CD8-positive, alpha-beta T cell (primary cell): ENCODE measurements at regions of chr15 and their contacts with region 1.

Region 1: DNA sequence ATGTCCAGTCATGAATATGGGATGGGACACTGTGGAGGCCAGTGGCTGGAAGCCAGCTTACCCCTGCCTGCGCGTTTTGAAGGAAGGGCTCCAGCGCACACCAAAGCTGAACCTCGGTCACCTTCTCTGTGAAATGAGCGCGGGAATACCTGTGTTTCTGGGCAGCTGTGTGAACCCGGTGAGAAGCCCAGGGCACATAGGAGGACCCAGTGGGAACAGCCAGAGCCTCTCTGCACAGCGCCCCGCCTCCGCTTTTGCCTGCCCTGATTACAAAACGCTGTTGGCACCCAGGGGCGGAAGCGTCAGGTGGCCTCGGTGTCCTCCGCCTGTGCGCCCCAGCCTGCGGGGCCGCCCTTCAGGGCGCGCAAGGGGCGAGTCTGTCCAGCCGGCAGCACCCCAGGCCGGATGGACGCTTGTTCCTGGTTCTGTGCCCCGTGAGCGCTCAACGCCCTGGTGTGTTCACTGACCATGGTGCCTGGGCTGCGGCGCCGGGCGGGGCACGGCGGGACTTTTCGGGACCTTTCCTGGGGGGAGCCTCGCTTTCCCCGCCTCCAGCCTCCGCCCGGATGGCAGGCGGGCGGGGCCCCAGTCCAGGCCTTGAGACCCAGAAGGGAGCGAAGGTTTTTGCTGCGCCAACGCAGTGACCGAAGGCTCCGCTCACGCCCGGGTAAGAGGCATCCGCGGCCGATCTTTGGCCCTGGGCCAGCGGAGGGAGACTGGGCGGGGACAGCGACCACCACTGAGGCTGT is at the start of gene SQOR:
- DNase-seq: peak; percentile 25 to 83 (median 67)
- ATAC-seq: peak; percentile 57
- H3K4me3 ChIP-seq: peak within 1 kb of the TSS; percentile 67 to 96
- H3K4me3 Mint-ChIP-seq: peak within 1 kb of the TSS; percentile 97
- H3K27ac ChIP-seq: peak within 1 kb of the TSS; percentile 72 to 78
- H3K27ac Mint-ChIP-seq: peak within 1 kb of the TSS; percentile 94
- H3K4me1 ChIP-seq: peaks cover 34% of the 10 kb centered on the region
- H3K4me1 Mint-ChIP-seq: peaks cover 43% of the 10 kb centered on the region
- H3K27me3 ChIP-seq: no peaks in the 10 kb centered on the region
- H3K27me3 Mint-ChIP-seq: no peaks in the 10 kb centered on the region
- CTCF ChIP-seq: no peak
- total RNA-seq, gene SQOR: 11.8 to 14.4 TPM

Region 2: DNA sequence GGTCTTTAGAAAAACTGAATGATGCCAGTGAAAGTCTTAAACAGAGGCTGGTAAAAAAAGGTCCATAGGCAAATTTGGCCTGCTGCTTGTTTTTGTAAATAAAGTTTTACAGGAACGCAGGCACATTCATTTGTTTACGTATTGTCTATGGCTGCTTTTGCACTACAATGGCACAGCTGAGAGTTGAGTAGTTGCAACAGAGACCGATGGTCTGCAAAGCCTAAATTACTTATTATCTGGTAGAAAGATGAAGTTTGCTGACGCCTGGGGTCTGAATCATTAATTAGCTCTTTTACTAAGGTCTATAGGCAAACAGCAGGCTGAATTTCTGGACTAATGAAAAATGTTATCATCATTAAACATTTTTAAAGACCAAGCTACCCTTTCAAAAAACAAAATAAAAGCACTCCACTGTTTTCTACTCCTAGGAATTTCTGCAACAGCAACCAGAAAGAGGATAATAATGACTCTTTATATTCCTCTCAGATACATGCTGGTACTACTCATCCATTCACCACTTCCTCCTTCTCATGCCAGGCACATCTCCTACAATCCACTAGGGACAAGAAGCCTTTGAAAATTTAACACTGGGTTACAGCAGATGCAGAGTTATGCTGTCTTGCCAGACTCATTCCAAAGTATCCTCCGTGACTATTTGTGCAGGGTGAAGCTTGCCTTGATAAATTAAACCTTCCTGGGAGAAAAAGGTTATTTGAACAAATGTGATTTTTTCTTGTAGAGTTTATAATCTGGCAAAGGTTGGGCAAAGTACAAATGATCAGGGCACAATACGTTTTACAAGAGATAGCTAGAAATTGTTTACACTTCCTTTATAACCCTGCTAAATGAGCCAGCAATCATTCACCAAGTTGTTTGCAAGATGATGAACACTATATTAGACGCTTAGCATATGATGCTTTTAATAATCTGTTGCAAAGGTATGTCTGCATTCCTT is 262.3 kb before region 1 on chr15:
- CTCF ChIA-PET with region 1: no interaction called
- POLR2A ChIA-PET with region 1: no interaction called
- intact Hi-C with region 1: no loop called
- DNase-seq: no peak
- ATAC-seq: no peak
- H3K4me3 ChIP-seq: no peak overlapping the region
- H3K4me3 Mint-ChIP-seq: no peak overlapping the region
- H3K27ac ChIP-seq: no peak overlapping the region
- H3K27ac Mint-ChIP-seq: no peak overlapping the region
- H3K4me1 ChIP-seq: peaks cover 5% of the 10 kb centered on the region
- H3K4me1 Mint-ChIP-seq: peaks cover 13% of the 10 kb centered on the region
- H3K27me3 ChIP-seq: peaks cover 4 to 5% of the 10 kb centered on the region in 2 experiments
- H3K27me3 Mint-ChIP-seq: peaks cover 40% of the 10 kb centered on the region
- CTCF ChIP-seq: no peak

Region 3: GRCh38 chr15:45587095-45587860 is 47.3 kb before region 1 on chr15 and contains the start of gene BLOC1S6:
- CTCF ChIA-PET with region 1: interaction called, 5 read pairs
- POLR2A ChIA-PET with region 1: interaction called, 11 read pairs
- intact Hi-C with region 1: loop called (anchors 1 kb)
- DNase-seq: peak; percentile 83 to 95 (median 90)
- ATAC-seq: peak; percentile 77
- H3K4me3 ChIP-seq: peak within 1 kb of the TSS; percentile 82 to 86
- H3K4me3 Mint-ChIP-seq: peak within 1 kb of the TSS; percentile 100
- H3K27ac ChIP-seq: peak within 1 kb of the TSS; percentile 93 to 98
- H3K27ac Mint-ChIP-seq: peak within 1 kb of the TSS; percentile 100
- H3K4me1 ChIP-seq: peaks cover 32% of the 10 kb centered on the region
- H3K4me1 Mint-ChIP-seq: peaks cover 50% of the 10 kb centered on the region
- H3K27me3 ChIP-seq: no peaks in the 10 kb centered on the region
- H3K27me3 Mint-ChIP-seq: no peaks in the 10 kb centered on the region
- CTCF ChIP-seq: no peak
- total RNA-seq, gene BLOC1S6: 78.1 to 78.9 TPM

Region 4: DNA sequence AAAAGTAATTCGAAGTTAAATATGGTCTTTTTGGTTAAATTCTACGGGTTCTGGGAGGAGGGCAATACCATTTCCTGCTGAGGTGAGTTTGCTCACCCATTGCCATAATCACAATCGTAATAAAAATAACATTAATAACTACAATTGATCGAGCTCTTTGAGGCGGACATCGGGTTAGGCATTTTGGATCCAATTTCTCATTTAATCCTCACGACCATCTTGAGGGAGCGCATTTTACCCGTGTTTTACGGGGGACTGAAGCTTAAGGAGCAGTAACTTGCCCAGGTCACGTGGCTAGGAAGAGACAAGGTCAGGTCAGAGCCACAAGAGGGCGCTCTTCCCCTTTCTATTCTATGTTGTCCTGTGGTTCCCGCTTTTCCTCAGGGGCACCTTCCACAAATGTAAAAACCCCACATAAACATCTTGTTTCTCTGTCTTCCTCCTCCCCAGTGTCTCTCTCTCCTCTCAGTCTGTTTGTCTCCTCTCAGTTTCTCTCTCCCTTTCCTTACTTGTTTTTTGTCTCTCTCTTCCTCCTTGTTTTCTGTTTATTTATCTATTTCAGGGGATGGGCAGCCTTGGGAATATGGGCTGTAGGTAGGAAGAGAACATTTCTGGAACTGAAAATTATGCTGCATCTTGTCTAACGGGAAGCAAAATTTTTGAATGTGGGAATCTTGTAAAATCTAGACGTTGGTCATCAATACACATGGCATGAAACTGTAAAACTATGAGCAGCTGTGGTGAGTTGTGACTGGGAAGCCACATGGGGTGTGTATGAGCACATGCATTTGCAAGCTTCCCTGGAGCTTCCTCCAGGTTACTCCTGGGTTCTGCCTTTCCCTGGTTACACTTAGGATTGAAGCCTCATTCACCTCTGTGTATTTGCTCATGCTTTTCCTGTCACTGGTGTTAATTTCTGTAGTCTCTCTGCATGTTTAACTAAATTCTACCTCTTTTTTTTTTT is 71.2 kb after region 1 on chr15:
- CTCF ChIA-PET with region 1: interaction called, 4 read pairs
- POLR2A ChIA-PET with region 1: no interaction called
- intact Hi-C with region 1: loop called (anchors 2 to 5 kb)
- DNase-seq: peak; percentile 37 to 85 (median 68)
- ATAC-seq: peak; percentile 84
- H3K4me3 ChIP-seq: peak overlapping the region; percentile 57 to 79
- H3K4me3 Mint-ChIP-seq: peak overlapping the region; percentile 85
- H3K27ac ChIP-seq: peak overlapping the region in 1 of 2 experiments; percentile 39
- H3K27ac Mint-ChIP-seq: peak overlapping the region; percentile 67
- H3K4me1 ChIP-seq: peaks cover 7% of the 10 kb centered on the region
- H3K4me1 Mint-ChIP-seq: peaks cover 11% of the 10 kb centered on the region
- H3K27me3 ChIP-seq: peaks cover 0 to 6% of the 10 kb centered on the region in 2 experiments
- H3K27me3 Mint-ChIP-seq: peaks cover 5% of the 10 kb centered on the region
- CTCF ChIP-seq: peak; percentile 98